ENCODE measurements at regions of chr4 and their contacts with region 1.

Region 1: GRCh38 chr4:186563761-186564160 is 8.4 kb upstream of the MTNR1A start:
- DNase-seq: no peak
- ATAC-seq: no peak
- H3K4me3 ChIP-seq: no peak overlapping the region
- H3K27ac ChIP-seq: no peak overlapping the region
- H3K4me1 ChIP-seq: no peaks in the 10 kb centered on the region
- H3K27me3 ChIP-seq: no peaks in the 10 kb centered on the region
- CTCF ChIP-seq: no peak
- EP300 ChIP-seq: no peak
- POLR2A ChIP-seq: no peak
- RAD21 ChIP-seq: no peak

Region 2: DNA sequence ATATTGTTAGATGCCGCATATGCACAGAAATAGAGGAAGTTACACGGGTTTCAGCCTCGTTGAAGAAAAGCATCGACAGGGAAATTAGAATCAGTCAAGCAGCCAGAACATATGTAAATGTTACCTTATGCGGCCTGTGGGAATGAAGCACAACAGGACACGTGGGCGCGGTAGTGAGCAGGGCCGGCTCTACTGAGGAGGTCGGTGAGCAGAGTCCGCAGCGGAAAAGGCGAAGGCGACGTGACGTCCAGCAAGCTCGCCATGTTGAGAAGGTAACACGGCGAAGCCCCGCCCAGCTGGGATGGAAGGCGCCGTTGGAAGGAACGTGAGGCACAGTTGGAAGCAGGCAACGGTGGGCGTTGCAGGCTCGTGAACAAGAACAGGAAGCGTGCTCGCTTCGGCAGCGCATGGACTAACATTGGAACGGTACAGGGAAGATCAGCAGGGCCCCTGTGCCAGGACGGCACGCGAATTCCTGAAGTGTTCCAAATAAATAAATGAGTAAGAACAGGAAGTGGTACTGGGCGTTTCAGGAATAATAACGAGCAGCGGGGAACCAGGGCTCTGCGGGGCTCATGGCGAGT is 62.9 kb before region 1 on chr4:
- CTCF ChIA-PET with region 1: no interaction called
- POLR2A ChIA-PET with region 1: no interaction called
- RAD21 ChIA-PET with region 1: no interaction called
- SMC1A ChIA-PET with region 1: no interaction called
- in situ Hi-C with region 1: no loop called
- intact Hi-C with region 1: loop called (anchors 10 kb)
- DNase-seq: no peak
- ATAC-seq: no peak
- H3K4me3 ChIP-seq: no peak overlapping the region
- H3K27ac ChIP-seq: no peak overlapping the region
- H3K4me1 ChIP-seq: no peaks in the 10 kb centered on the region
- H3K27me3 ChIP-seq: no peaks in the 10 kb centered on the region
- CTCF ChIP-seq: no peak
- EP300 ChIP-seq: no peak
- POLR2A ChIP-seq: no peak
- RAD21 ChIP-seq: no peak

Measured in GM12878 (cell line).